ENCODE measurements at regions of chr1 and their contacts with region 1.

Region 1: GRCh38 chr1:207797229-207797961 is 45.5 kb downstream of the CD46 start:
- DNase-seq: peak; percentile 90
- H3K4me3 Mint-ChIP-seq: no peak overlapping the region
- H3K27ac Mint-ChIP-seq: peak overlapping the region; percentile 64
- H3K4me1 Mint-ChIP-seq: peaks cover 36% of the 10 kb centered on the region
- H3K27me3 Mint-ChIP-seq: no peaks in the 10 kb centered on the region

Region 2: GRCh38 chr1:207698822-207699483 is 98.4 kb before region 1 on chr1:
- CTCF ChIA-PET with region 1: interaction called, 10 read pairs
- POLR2A ChIA-PET with region 1: no interaction called
- intact Hi-C with region 1: loop called (anchors 5 kb)
- DNase-seq: peak; percentile 66
- H3K4me3 Mint-ChIP-seq: no peak overlapping the region
- H3K27ac Mint-ChIP-seq: no peak overlapping the region
- H3K4me1 Mint-ChIP-seq: no peaks in the 10 kb centered on the region
- H3K27me3 Mint-ChIP-seq: peaks cover 13% of the 10 kb centered on the region

Region 3: GRCh38 chr1:207711285-207711684 is 86.1 kb before region 1 on chr1:
- CTCF ChIA-PET with region 1: interaction called, 6 read pairs
- POLR2A ChIA-PET with region 1: no interaction called
- intact Hi-C with region 1: loop called (anchors 1 kb)
- DNase-seq: no peak
- H3K4me3 Mint-ChIP-seq: no peak overlapping the region
- H3K27ac Mint-ChIP-seq: no peak overlapping the region
- H3K4me1 Mint-ChIP-seq: no peaks in the 10 kb centered on the region
- H3K27me3 Mint-ChIP-seq: no peaks in the 10 kb centered on the region

Region 4: DNA sequence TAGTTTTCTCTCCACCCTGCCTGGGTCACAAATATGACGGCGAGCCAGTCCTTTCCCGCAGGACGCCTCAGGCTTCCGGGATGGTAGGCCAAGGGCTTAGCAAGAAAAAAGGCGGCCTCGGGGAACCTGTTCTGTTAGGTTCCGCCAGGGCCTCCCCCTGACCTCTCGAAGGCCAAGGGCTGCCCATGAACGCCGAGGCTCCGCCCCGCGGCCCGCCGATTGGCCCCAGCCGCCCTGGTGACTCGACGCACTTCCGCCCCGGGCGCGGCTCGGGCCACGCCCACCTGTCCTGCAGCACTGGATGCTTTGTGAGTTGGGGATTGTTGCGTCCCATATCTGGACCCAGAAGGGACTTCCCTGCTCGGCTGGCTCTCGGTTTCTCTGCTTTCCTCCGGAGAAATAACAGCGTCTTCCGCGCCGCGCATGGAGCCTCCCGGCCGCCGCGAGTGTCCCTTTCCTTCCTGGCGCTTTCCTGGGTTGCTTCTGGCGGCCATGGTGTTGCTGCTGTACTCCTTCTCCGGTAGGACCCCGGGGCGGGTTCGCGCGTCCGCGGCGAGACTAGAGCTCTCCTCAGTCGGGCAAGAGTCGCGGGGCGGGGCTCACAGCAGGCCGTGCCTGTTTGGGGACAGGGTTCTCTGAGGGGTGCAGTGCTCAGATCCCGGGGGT is 45.5 kb before region 1 on chr1 and contains the start of gene CD46:
- CTCF ChIA-PET with region 1: interaction called, 12 read pairs
- POLR2A ChIA-PET with region 1: no interaction called
- intact Hi-C with region 1: loop called (anchors 2 kb)
- DNase-seq: peak; percentile 97
- H3K4me3 Mint-ChIP-seq: peak within 1 kb of the TSS; percentile 94
- H3K27ac Mint-ChIP-seq: peak within 1 kb of the TSS; percentile 96
- H3K4me1 Mint-ChIP-seq: peaks cover 60% of the 10 kb centered on the region
- H3K27me3 Mint-ChIP-seq: no peaks in the 10 kb centered on the region
- total RNA-seq, gene CD46: 94.6 to 96.9 TPM

Region 5: GRCh38 chr1:207811920-207812720 is 14.7 kb after region 1 on chr1:
- CTCF ChIA-PET with region 1: interaction called, 23 read pairs
- POLR2A ChIA-PET with region 1: interaction called, 3 read pairs
- intact Hi-C with region 1: loop called (anchors 1 kb)
- DNase-seq: no peak
- H3K4me3 Mint-ChIP-seq: no peak overlapping the region
- H3K27ac Mint-ChIP-seq: peak overlapping the region; percentile 74
- H3K4me1 Mint-ChIP-seq: peaks cover 86% of the 10 kb centered on the region
- H3K27me3 Mint-ChIP-seq: no peaks in the 10 kb centered on the region

Region 6: DNA sequence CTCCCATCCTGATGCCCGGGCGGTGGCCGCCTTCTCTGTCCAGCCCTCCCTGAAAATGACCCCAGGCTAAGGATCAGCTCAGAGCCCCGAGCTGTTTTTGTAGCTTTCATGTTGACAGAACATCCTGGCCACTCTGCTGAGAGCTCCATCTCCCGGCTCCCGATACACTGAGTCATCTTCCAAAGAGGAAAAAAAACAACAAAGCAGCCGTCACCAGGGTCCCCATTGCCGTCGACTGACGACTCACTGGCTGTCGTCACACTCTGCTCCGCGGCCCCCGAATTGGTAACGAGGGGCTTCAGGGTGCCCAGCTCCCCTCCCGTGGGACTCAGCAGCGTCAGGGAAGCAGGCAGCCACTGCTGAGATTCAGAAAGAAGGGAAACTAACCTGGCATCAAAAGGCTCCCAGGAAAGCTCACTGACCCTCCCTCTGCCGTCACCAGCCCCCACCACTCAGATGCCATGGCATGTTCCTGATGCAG is 21.6 kb after region 1 on chr1:
- CTCF ChIA-PET with region 1: interaction called, 39 read pairs
- POLR2A ChIA-PET with region 1: interaction called, 4 read pairs
- intact Hi-C with region 1: loop called (anchors 1 kb)
- DNase-seq: no peak
- H3K4me3 Mint-ChIP-seq: no peak overlapping the region
- H3K27ac Mint-ChIP-seq: peak overlapping the region; percentile 14
- H3K4me1 Mint-ChIP-seq: peaks cover 80% of the 10 kb centered on the region
- H3K27me3 Mint-ChIP-seq: peaks cover 2% of the 10 kb centered on the region

Region 7: GRCh38 chr1:208203127-208203847 is 405.9 kb after region 1 on chr1:
- CTCF ChIA-PET with region 1: no interaction called
- POLR2A ChIA-PET with region 1: no interaction called
- intact Hi-C with region 1: no loop called
- DNase-seq: no peak
- H3K4me3 Mint-ChIP-seq: no peak overlapping the region
- H3K27ac Mint-ChIP-seq: no peak overlapping the region
- H3K4me1 Mint-ChIP-seq: no peaks in the 10 kb centered on the region
- H3K27me3 Mint-ChIP-seq: no peaks in the 10 kb centered on the region

Region 8: GRCh38 chr1:209747580-209748262 is 1950.3 kb after region 1 on chr1:
- CTCF ChIA-PET with region 1: no interaction called
- POLR2A ChIA-PET with region 1: no interaction called
- intact Hi-C with region 1: no loop called
- DNase-seq: peak; percentile 96
- H3K4me3 Mint-ChIP-seq: peak overlapping the region; percentile 62
- H3K27ac Mint-ChIP-seq: peak overlapping the region; percentile 87
- H3K4me1 Mint-ChIP-seq: peaks cover 79% of the 10 kb centered on the region
- H3K27me3 Mint-ChIP-seq: no peaks in the 10 kb centered on the region